Motor neuron (in vitro differentiated cells): ENCODE measurements at regions of chr5 and their contacts with region 1.

Region 1: GRCh38 chr5:128674825-128675446 is 136.9 kb upstream of the FBN2 start:
- ATAC-seq: peak in 3 of 8 experiments; percentile 63 to 75 (median 67)
- H3K4me3 ChIP-seq: no peak overlapping the region
- H3K27ac ChIP-seq: no peak overlapping the region
- H3K4me1 ChIP-seq: no peaks in the 10 kb centered on the region

Region 2: DNA sequence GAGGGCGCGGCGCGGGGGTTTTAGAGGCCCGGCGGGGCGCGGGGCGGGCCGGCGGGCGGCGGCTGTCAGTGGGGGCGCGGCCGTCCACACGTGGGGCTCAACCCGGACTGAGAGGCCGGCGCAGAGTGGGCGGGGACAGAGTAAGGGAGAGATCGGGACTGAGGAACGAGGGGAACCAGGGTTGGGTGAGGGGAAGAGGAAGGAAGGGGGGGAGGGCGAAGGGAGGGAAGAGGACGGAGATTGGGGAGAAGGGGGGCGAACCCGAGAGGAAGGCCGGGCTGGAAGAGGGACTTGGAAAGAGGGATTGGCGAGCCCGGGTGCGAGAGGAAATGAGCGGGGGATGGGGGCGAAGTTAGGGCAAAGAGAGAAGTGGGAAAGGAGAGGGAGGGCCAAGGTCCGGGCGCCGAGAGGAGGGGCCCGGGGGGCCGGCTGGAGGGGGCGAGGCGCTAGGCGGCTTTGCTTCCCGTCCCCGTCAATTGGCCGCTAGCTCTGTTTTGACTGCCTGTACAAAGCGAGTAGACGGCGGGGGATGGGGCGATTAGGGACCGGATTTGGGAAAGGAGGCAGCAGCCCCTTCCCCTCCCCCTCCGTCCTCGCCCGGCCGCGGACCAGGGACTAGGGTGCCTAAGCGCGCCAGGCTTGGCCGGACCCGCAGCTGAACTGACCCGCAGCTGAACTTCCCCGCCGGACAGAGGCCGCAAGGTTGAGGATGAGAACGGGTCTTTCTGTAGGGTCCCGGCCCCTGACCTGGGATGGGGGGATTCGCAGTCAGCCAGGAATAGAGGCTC is 136.5 kb before region 1 on chr5:
- in situ Hi-C with region 1: loop called in 1 of 9 experiments (anchors 25 kb)
- ATAC-seq: peak; percentile 74 to 85 (median 76)
- H3K4me3 ChIP-seq: peak overlapping the region; percentile 55 to 88 (median 73)
- H3K27ac ChIP-seq: peak overlapping the region in 1 of 2 donors; percentile 77
- H3K4me1 ChIP-seq: peaks cover 11 to 13% of the 10 kb centered on the region in 2 donors

Region 3: GRCh38 chr5:128815201-128815600 is 140.3 kb after region 1 on chr5:
- in situ Hi-C with region 1: no loop called
- ATAC-seq: no peak
- H3K4me3 ChIP-seq: no peak overlapping the region
- H3K27ac ChIP-seq: no peak overlapping the region
- H3K4me1 ChIP-seq: no peaks in the 10 kb centered on the region

Region 4: DNA sequence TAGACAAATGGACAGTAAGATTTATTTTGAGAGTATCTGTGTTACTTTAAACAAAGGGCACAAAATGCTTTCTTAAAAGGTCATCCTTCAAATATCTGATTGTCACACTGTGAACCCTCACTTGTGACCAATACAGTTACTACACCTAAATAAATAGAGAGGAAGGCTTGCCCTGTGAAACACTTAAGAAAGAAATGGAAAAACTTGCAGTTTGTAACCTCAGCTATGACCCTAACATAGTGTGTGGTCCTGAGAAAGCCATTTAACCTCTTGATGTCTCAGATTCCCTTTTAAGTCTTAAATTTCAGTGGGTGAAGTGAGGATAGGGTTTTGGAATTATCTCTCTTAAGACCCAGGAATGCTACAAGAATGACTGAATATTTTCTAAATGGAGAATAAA is 163.7 kb after region 1 on chr5:
- in situ Hi-C with region 1: loop called in 3 of 9 experiments (anchors 10 to 25 kb)
- ATAC-seq: no peak
- H3K4me3 ChIP-seq: no peak overlapping the region
- H3K27ac ChIP-seq: no peak overlapping the region
- H3K4me1 ChIP-seq: no peaks in the 10 kb centered on the region

Region 5: GRCh38 chr5:129399069-129399468 is 724.1 kb after region 1 on chr5:
- in situ Hi-C with region 1: no loop called
- ATAC-seq: no peak
- H3K4me3 ChIP-seq: no peak overlapping the region
- H3K27ac ChIP-seq: no peak overlapping the region
- H3K4me1 ChIP-seq: no peaks in the 10 kb centered on the region